ENCODE measurements at regions of chr5 and their contacts with region 1.

Region 1: GRCh38 chr5:151126199-151126645 is 31.4 kb downstream of the ANXA6 start:
- DNase-seq: no peak
- H3K4me3 ChIP-seq: no peak overlapping the region
- CTCF ChIP-seq: peak; percentile 85

Region 2: DNA sequence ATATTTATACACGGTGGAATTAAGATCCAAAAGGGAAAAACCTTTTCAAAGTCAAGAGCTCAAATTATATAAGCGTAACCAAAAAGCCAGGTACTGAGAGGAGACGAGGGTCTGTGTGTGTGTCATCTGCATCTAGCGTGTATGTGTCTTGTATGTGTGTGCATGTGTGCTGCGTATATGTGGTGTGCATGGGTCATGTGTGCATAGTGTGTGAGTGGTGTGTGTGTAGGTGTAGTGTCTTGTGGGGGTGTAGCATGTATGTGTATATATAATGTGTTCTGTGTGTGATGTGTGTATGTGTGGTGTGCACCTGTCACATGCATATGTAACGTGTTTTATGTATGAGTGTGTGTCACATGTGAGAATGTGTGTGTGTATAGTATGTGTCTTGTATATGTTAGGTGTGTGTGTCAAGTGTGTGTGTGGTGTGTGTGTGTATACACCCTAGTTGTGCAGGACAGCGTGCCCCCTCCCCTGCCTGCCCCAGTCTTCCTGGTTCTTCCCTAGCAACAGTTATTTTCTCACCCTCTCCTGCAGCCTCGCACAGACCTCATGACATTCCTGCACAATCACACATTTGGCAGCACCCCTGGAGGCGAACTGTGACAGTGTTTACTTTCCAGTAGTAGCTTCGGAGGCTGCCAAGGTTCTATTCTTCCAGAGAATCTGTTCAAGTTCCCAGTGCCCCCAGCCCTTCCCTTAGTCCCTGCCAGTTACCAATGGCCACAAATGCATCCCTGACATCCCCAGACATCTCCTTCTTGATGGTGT is 18.3 kb before region 1 on chr5:
- CTCF ChIA-PET with region 1: interaction called, 256 read pairs
- POLR2A ChIA-PET with region 1: no interaction called
- DNase-seq: no peak
- H3K4me3 ChIP-seq: no peak overlapping the region
- CTCF ChIP-seq: no peak

Region 3: GRCh38 chr5:151150471-151151262 is 24.4 kb after region 1 on chr5:
- CTCF ChIA-PET with region 1: interaction called, 208 read pairs
- POLR2A ChIA-PET with region 1: interaction called, 3 read pairs
- DNase-seq: no peak
- H3K4me3 ChIP-seq: no peak overlapping the region
- CTCF ChIP-seq: no peak

Region 4: GRCh38 chr5:151164686-151165392 is 38.6 kb after region 1 on chr5:
- CTCF ChIA-PET with region 1: interaction called, 232 read pairs
- POLR2A ChIA-PET with region 1: no interaction called
- DNase-seq: no peak
- H3K4me3 ChIP-seq: no peak overlapping the region
- CTCF ChIP-seq: peak; percentile 87

Region 5: GRCh38 chr5:152824316-152824715 is 1698.1 kb after region 1 on chr5:
- CTCF ChIA-PET with region 1: no interaction called
- POLR2A ChIA-PET with region 1: no interaction called
- DNase-seq: no peak
- H3K4me3 ChIP-seq: no peak overlapping the region
- CTCF ChIP-seq: no peak